ENCODE measurements at regions of chr13 and their contacts with region 1.

Region 1: DNA sequence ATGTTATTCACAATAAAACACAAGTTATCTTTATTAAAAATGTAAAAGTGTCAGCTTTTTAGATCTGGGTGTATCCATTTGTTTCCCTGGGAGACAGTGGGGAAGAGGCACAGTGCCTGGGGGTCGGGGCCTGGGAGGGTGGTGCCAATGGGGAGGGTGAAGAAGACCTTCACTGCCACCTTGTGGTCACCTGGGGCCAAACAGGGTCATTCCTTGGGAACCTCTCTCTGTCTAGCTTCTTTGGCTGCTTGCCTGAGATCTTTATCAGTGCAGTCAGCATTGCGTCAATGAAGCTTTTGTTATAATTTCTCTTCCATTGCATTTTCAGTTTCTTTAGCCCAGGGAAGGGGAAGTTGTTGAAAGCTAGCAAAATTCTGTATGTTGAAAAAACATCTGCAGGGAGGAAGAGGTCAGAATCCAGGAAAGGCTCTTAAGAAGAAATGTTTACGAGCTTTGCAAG is 39.1 kb downstream of the PCDH8 start:
- DNase-seq: peak; percentile 61 to 88
- H3K4me3 ChIP-seq: no peak overlapping the region
- H3K27ac ChIP-seq: no peak overlapping the region
- H3K4me1 ChIP-seq: peaks cover 0 to 6% (median 4%) of the 10 kb centered on the region in 4 experiments; a peak in 4 of 7 replicates
- H3K27me3 ChIP-seq: no peaks in the 10 kb centered on the region
- CTCF ChIP-seq: peak; percentile 85 to 91 (median 86)
- EP300 ChIP-seq: no peak
- POLR2A ChIP-seq: no peak
- RAD21 ChIP-seq: peak; percentile 96 to 97

Region 2: DNA sequence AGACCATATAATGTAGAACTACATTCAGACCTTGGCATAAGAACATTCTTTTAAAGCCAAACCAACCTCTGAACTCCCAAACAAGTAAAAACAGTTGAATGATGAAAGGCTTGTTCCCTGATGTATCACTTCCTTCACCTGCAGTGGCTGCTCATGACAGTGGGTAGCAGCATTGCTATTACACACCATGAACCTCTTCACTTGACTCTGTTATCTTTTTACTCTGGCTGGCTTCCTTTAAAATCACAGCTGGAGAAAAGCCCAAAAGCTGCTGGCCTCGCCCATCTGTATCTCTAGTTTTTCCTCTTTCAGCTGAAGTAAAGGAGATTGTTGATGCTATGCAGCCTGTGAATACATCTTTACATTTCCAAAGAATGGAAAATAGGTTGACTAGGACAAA is 426.0 kb before region 1 on chr13:
- CTCF ChIA-PET with region 1: no interaction called
- POLR2A ChIA-PET with region 1: no interaction called
- DNase-seq: no peak
- H3K4me3 ChIP-seq: no peak overlapping the region
- H3K27ac ChIP-seq: no peak overlapping the region
- H3K4me1 ChIP-seq: no peaks in the 10 kb centered on the region
- H3K27me3 ChIP-seq: no peaks in the 10 kb centered on the region; a peak in 1 of 7 replicates
- CTCF ChIP-seq: no peak
- EP300 ChIP-seq: no peak
- POLR2A ChIP-seq: no peak
- RAD21 ChIP-seq: no peak

Region 3: DNA sequence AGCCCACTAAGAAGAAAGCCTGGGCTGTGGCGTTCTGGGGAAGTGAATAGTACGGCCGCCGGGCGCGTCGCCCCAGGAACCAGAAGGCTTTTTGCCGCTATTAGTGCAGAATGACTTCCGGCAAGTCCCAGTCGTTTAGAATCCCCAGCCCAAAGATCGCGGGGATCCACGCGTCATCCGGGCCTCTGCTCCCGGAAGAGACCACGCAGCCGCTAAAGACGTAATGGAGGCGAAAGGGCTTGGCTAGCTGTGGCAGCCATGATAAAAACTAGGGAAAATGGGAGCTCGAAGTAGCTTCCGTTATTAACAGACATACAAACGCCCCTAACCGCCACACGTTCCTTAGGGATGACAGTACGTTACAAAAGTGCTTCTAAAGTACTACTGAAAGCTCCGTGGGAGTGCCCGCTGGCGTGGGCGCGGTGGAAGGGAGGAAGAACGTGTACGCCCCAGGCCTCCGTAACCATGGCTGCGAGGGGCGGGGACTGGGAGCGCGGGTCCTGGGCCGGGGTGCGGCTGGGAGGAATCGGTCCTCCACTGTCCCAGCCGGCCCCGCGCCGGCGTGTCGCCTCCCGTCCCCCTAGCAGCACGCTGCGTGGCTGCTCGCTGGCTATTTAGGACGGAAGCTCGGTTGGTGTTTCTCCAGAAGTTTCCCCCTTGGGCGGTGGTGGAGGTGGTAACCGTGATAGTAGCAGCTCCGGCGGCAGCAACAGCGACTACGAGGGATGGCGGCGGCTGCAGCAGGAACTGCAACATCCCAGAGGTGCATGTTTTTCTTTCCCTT is 157.0 kb before region 1 on chr13 and contains the start of gene SUGT1:
- CTCF ChIA-PET with region 1: interaction called, 25 read pairs
- POLR2A ChIA-PET with region 1: interaction called, 12 read pairs
- DNase-seq: peak; percentile 90 to 96
- H3K4me3 ChIP-seq: peak within 1 kb of the TSS; percentile 89 to 98 (median 95)
- H3K27ac ChIP-seq: peak within 1 kb of the TSS; percentile 99
- H3K4me1 ChIP-seq: peaks cover 0 to 5% (median 0%) of the 10 kb centered on the region in 4 experiments; a peak in 3 of 7 replicates
- H3K27me3 ChIP-seq: no peaks in the 10 kb centered on the region
- CTCF ChIP-seq: peak; percentile 53 to 78 (median 72)
- EP300 ChIP-seq: no peak; a peak in 1 of 3 replicates
- POLR2A ChIP-seq: peak; percentile 85 to 95
- RAD21 ChIP-seq: peak; percentile 19 to 44; a peak in 3 of 4 replicates
- total RNA-seq, gene SUGT1: 99.4 and 103 TPM in 2 replicates

Region 4: GRCh38 chr13:52695856-52696255 is 113.5 kb before region 1 on chr13:
- CTCF ChIA-PET with region 1: interaction called, 58 read pairs
- POLR2A ChIA-PET with region 1: interaction called, 6 read pairs
- DNase-seq: no peak
- H3K4me3 ChIP-seq: no peak overlapping the region
- H3K27ac ChIP-seq: no peak overlapping the region
- H3K4me1 ChIP-seq: no peaks in the 10 kb centered on the region
- H3K27me3 ChIP-seq: no peaks in the 10 kb centered on the region
- CTCF ChIP-seq: no peak
- EP300 ChIP-seq: no peak
- POLR2A ChIP-seq: no peak
- RAD21 ChIP-seq: no peak

Region 5: DNA sequence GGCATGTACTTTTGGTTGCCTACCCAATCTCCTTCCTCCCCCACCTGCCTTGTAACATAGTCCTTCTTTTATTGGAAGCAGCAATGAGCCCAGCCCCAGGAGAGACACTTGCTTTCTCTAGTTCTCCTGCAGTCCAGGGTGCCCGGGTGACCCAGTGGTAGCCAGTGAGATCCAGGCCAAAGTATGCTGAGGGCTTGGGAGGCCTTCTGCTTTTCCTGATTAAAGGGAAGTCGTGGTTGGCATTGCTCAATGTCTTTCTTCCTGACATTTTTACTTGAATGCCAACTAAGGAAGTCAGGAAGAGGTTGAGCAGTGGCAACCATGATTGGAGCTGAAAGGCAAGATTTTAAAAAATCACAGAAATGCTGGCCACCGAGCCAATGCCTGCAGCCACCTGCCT is 95.4 kb before region 1 on chr13:
- CTCF ChIA-PET with region 1: interaction called, 19 read pairs
- POLR2A ChIA-PET with region 1: no interaction called
- DNase-seq: no peak
- H3K4me3 ChIP-seq: no peak overlapping the region
- H3K27ac ChIP-seq: no peak overlapping the region
- H3K4me1 ChIP-seq: peaks cover 0 to 4% (median 3%) of the 10 kb centered on the region in 4 experiments; a peak in 3 of 7 replicates
- H3K27me3 ChIP-seq: no peaks in the 10 kb centered on the region
- CTCF ChIP-seq: no peak
- EP300 ChIP-seq: no peak
- POLR2A ChIP-seq: no peak
- RAD21 ChIP-seq: no peak

Region 6: GRCh38 chr13:52738719-52739467 is 70.4 kb before region 1 on chr13:
- CTCF ChIA-PET with region 1: interaction called, 15 read pairs
- POLR2A ChIA-PET with region 1: interaction called, 5 read pairs
- DNase-seq: peak in 1 of 2 experiments; percentile 82
- H3K4me3 ChIP-seq: peak overlapping the region; percentile 63 to 76 (median 69)
- H3K27ac ChIP-seq: peak overlapping the region; percentile 53; the same call in 1 of the 2 replicates
- H3K4me1 ChIP-seq: peaks cover 3 to 20% (median 18%) of the 10 kb centered on the region in 4 experiments
- H3K27me3 ChIP-seq: no peaks in the 10 kb centered on the region
- CTCF ChIP-seq: peak; percentile 63 to 94 (median 65)
- EP300 ChIP-seq: no peak; a peak in 1 of 3 replicates
- POLR2A ChIP-seq: peak in 1 of 2 experiments; percentile 59; a peak in 2 of 3 replicates
- RAD21 ChIP-seq: peak; percentile 27 to 66

Region 7: DNA sequence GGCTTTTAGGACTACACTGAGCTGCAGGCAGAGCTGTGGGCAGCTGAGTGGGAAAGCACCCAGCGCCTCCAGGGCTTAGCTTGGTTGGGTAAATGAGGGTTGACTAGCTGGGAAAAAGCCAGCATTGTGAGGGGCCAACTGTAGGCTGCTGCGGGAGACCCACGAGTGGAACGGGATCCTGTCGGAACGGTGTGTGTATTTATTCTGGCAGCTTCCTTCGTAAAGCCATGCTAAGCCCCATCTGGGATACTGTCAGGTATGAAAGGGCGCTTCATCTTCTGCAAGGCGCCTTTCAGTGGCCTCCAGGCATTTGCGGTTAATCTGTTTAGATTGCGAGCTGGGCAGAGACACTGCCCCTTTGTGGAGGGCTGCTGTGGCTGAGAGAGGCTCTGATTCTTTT is 30.2 kb before region 1 on chr13:
- CTCF ChIA-PET with region 1: interaction called, 19 read pairs
- POLR2A ChIA-PET with region 1: no interaction called
- DNase-seq: no peak
- H3K4me3 ChIP-seq: no peak overlapping the region
- H3K27ac ChIP-seq: no peak overlapping the region
- H3K4me1 ChIP-seq: 0 out of 7 replicates have a peak, but pooled peaks cover 0 to 2% (median 0%) of the 10 kb centered on the region in 4 experiments
- H3K27me3 ChIP-seq: no peaks in the 10 kb centered on the region
- CTCF ChIP-seq: no peak
- EP300 ChIP-seq: no peak
- POLR2A ChIP-seq: no peak
- RAD21 ChIP-seq: no peak

Region 8: GRCh38 chr13:52830946-52831345 is 21.6 kb after region 1 on chr13:
- CTCF ChIA-PET with region 1: interaction called, 27 read pairs
- POLR2A ChIA-PET with region 1: no interaction called
- DNase-seq: no peak
- H3K4me3 ChIP-seq: no peak overlapping the region
- H3K27ac ChIP-seq: no peak overlapping the region
- H3K4me1 ChIP-seq: peaks cover 0 to 12% (median under 1%) of the 10 kb centered on the region in 4 experiments; a peak in 3 of 7 replicates
- H3K27me3 ChIP-seq: no peaks in the 10 kb centered on the region
- CTCF ChIP-seq: no peak
- EP300 ChIP-seq: no peak
- POLR2A ChIP-seq: no peak
- RAD21 ChIP-seq: no peak

Measured in H1 (cell line).